ENCODE measurements at regions of chr14 and their contacts with region 1.

Region 1: DNA sequence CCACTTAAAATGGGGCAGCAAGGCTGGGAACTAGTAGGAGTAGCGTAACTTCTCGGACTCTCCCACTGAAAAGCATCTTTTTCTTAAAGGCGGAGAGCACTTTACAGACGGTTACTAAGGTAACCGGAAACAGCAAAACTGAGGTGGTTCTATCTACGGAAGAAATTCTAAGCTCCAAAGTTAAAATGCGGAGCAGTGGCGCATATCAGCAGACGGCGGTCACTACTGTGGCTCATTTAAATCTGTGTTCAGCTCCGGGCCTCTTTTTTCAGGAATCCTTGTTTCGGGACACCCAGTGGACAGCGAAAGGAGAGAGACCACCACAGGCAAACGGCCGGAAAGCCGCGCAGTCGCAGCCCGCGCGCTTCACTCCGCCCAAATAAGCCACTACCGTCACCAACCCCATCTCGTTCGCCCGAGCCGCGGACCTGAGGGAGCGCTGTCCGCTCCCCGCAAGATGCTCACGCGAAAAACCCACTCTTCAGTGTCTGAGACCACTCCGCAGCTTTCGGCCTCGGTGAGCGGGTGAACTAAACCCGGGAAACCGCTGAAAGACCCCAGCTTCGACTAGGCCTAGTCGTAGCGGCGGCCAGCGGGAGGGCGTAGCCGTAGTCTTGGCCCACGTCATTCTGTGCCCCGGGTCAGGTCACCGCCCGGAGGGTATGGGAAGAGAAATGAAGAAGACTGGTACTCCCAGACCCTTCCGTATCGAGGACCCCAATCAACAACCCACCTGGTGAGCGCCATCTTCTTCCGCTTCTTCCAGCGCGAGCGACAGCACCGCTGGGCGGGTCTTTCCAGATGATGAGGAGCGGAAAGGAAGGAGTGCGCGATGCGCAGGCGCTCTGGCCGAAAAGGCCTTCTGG is at the start of gene SNW1:
- DNase-seq: peak; percentile 79 to 98 (median 87)
- ATAC-seq: peak; percentile 90
- H3K4me3 ChIP-seq: peak within 1 kb of the TSS; percentile 59
- H3K4me3 Mint-ChIP-seq: peak within 1 kb of the TSS; percentile 99
- H3K27ac ChIP-seq: peak within 1 kb of the TSS; percentile 89 to 94
- H3K27ac Mint-ChIP-seq: peak within 1 kb of the TSS; percentile 99
- H3K4me1 ChIP-seq: peaks cover 42% of the 10 kb centered on the region
- H3K4me1 Mint-ChIP-seq: peaks cover 45% of the 10 kb centered on the region
- H3K27me3 ChIP-seq: no peaks in the 10 kb centered on the region
- H3K27me3 Mint-ChIP-seq: no peaks in the 10 kb centered on the region
- CTCF ChIP-seq: no peak
- total RNA-seq, gene SNW1: 131 to 136 TPM

Region 2: GRCh38 chr14:77320238-77320935 is 440.2 kb before region 1 on chr14 and contains the start of gene POMT2:
- CTCF ChIA-PET with region 1: no interaction called
- POLR2A ChIA-PET with region 1: interaction called, 6 read pairs
- intact Hi-C with region 1: loop called in 1 of 2 experiments (anchors 2 kb)
- DNase-seq: peak; percentile 86 to 95 (median 90)
- ATAC-seq: peak; percentile 47
- H3K4me3 ChIP-seq: peak within 1 kb of the TSS; percentile 93
- H3K4me3 Mint-ChIP-seq: peak within 1 kb of the TSS; percentile 100
- H3K27ac ChIP-seq: peak within 1 kb of the TSS; percentile 95 to 98
- H3K27ac Mint-ChIP-seq: peak within 1 kb of the TSS; percentile 100
- H3K4me1 ChIP-seq: peaks cover 23% of the 10 kb centered on the region
- H3K4me1 Mint-ChIP-seq: peaks cover 31% of the 10 kb centered on the region
- H3K27me3 ChIP-seq: no peaks in the 10 kb centered on the region
- H3K27me3 Mint-ChIP-seq: no peaks in the 10 kb centered on the region
- CTCF ChIP-seq: peak; percentile 38
- total RNA-seq, gene POMT2: 7.6 to 8.2 TPM

Region 3: DNA sequence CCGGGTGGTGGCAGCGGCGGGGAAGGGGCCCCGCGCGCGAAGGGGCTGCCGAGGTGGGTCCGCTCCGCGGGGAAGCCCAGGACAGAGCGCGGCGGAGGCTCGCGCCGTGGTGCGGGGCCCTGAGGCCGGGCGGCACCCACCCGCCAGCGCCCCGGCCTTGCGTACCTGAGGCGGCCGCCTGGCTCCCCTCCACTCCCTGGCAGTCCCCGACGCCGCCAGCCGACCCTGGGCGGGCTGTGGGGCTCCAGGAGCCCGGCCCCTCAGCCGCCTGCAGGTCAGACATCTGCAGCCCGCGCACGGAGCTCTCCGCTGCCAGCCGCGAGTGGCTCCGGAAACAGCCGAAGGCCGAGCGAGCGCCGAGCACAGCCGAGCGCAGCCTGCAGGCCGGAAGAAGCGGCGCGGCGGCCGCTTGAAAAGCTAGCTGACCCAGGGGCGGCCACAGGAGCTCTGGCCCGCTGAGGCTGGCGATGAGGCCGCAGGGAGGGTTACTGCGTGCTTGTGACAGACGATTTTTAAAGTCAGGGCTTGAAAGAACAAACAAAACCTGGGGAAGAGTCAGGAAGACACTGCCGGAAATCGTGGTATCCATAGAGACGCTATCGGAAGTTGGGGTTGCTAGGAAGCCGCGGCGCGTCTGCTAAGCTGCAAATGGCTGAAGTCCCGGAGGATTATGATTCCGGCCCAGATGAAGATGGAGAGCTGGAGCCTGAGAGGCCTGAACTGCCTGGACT is 383.7 kb before region 1 on chr14 and contains the starts of genes SAMD15 and TMED8:
- CTCF ChIA-PET with region 1: no interaction called
- POLR2A ChIA-PET with region 1: interaction called, 4 read pairs
- intact Hi-C with region 1: loop called in 1 of 2 experiments (anchors 5 kb)
- DNase-seq: peak; percentile 61 to 93 (median 79)
- ATAC-seq: peak; percentile 96
- H3K4me3 ChIP-seq: peak within 1 kb of the TSS; percentile 78
- H3K4me3 Mint-ChIP-seq: peak within 1 kb of the TSS; percentile 95
- H3K27ac ChIP-seq: peak within 1 kb of the TSS; percentile 67 to 89
- H3K27ac Mint-ChIP-seq: peak within 1 kb of the TSS; percentile 74
- H3K4me1 ChIP-seq: peaks cover 21% of the 10 kb centered on the region
- H3K4me1 Mint-ChIP-seq: peaks cover 41% of the 10 kb centered on the region
- H3K27me3 ChIP-seq: no peaks in the 10 kb centered on the region
- H3K27me3 Mint-ChIP-seq: no peaks in the 10 kb centered on the region
- CTCF ChIP-seq: no peak
- total RNA-seq, gene SAMD15: 0.34 TPM in 1 of 2 experiments, not detected in the other
- total RNA-seq, gene TMED8: 4.9 to 5.1 TPM

Region 4: DNA sequence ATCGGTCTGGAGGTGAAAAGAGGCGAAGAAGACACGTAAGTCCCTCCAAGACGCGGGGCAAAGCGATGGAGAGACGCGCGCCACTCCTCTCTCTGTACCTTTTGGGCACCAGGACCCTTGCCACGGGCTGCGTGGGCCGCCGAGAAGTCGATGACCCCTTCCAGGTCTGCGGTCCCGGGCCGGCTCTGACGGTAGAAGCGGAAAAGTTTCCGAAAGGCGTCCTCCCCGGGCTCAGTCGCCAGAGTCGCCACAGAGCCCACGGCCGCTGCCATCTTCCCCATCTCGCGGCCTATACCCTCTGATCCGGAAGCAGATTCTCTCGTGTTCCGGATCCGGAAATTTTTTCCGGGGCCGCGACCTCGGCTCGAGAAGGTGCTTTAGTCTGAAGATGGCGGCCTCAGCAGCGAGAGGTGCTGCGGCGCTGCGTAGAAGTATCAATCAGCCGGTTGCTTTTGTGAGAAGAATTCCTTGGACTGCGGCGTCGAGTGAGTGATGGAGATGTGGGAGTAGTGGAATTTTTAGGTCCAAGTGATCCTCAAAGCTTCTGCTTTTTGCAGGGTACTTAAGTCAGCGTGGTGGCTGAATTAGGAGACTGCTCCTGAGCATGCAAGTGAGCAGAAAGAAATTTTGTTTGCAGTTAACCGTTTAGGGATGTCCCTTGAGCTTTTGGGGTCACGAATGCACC is 52.7 kb before region 1 on chr14 and contains the starts of genes ALKBH1 and SLIRP:
- CTCF ChIA-PET with region 1: interaction called, 3 read pairs
- POLR2A ChIA-PET with region 1: interaction called, 17 read pairs
- intact Hi-C with region 1: loop called in 1 of 2 experiments (anchors 1 kb)
- DNase-seq: peak; percentile 79 to 93 (median 84)
- ATAC-seq: peak; percentile 98
- H3K4me3 ChIP-seq: peak within 1 kb of the TSS; percentile 82
- H3K4me3 Mint-ChIP-seq: peak within 1 kb of the TSS; percentile 95
- H3K27ac ChIP-seq: peak within 1 kb of the TSS; percentile 10 to 65
- H3K27ac Mint-ChIP-seq: peak within 1 kb of the TSS; percentile 87
- H3K4me1 ChIP-seq: peaks cover 19% of the 10 kb centered on the region
- H3K4me1 Mint-ChIP-seq: peaks cover 54% of the 10 kb centered on the region
- H3K27me3 ChIP-seq: no peaks in the 10 kb centered on the region
- H3K27me3 Mint-ChIP-seq: no peaks in the 10 kb centered on the region
- CTCF ChIP-seq: no peak
- total RNA-seq, gene ALKBH1: 5.6 to 8.5 TPM
- total RNA-seq, gene SLIRP: 46.8 to 49.7 TPM

Region 5: GRCh38 chr14:77786148-77786547 is 25.5 kb after region 1 on chr14:
- CTCF ChIA-PET with region 1: no interaction called
- POLR2A ChIA-PET with region 1: no interaction called
- intact Hi-C with region 1: no loop called
- DNase-seq: no peak
- ATAC-seq: no peak
- H3K4me3 ChIP-seq: no peak overlapping the region
- H3K4me3 Mint-ChIP-seq: no peak overlapping the region
- H3K27ac ChIP-seq: no peak overlapping the region
- H3K27ac Mint-ChIP-seq: no peak overlapping the region
- H3K4me1 ChIP-seq: no peaks in the 10 kb centered on the region
- H3K4me1 Mint-ChIP-seq: no peaks in the 10 kb centered on the region
- H3K27me3 ChIP-seq: peaks cover 0 to 5% of the 10 kb centered on the region in 2 experiments
- H3K27me3 Mint-ChIP-seq: peaks cover 4% of the 10 kb centered on the region
- CTCF ChIP-seq: no peak

Region 6: GRCh38 chr14:77799863-77800730 is 39.5 kb after region 1 on chr14 and contains the start of gene ADCK1:
- CTCF ChIA-PET with region 1: interaction called, 4 read pairs
- POLR2A ChIA-PET with region 1: interaction called, 22 read pairs
- intact Hi-C with region 1: loop called (anchors 1 to 2 kb)
- DNase-seq: peak; percentile 62 to 90 (median 78)
- ATAC-seq: peak; percentile 90
- H3K4me3 ChIP-seq: peak within 1 kb of the TSS; percentile 67
- H3K4me3 Mint-ChIP-seq: peak within 1 kb of the TSS; percentile 85
- H3K27ac ChIP-seq: peak within 1 kb of the TSS; percentile 60 to 85
- H3K27ac Mint-ChIP-seq: peak within 1 kb of the TSS; percentile 74
- H3K4me1 ChIP-seq: peaks cover 13% of the 10 kb centered on the region
- H3K4me1 Mint-ChIP-seq: peaks cover 11% of the 10 kb centered on the region
- H3K27me3 ChIP-seq: no peaks in the 10 kb centered on the region
- H3K27me3 Mint-ChIP-seq: no peaks in the 10 kb centered on the region
- CTCF ChIP-seq: peak; percentile 38
- total RNA-seq, gene ADCK1: 7.1 to 8.7 TPM

Region 7: DNA sequence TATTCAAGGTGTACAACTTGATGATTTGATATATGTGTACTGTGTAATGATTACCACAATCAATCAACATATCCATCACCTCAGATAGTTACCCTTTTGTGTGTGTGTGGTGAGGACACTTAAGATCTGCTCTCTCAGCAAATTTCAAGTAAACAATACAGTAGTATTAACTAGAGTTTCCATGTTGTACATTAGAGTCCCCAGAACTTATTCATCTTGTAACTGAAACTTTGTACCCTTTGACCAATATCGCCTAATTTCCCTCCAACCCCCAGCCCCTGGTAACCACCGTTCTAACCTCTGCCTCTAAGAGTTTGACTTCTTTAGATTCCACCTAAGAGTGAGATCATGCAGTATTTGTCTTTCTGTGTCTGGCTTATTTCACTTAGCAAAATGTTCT is 51.4 kb after region 1 on chr14:
- CTCF ChIA-PET with region 1: no interaction called
- POLR2A ChIA-PET with region 1: interaction called, 14 read pairs
- intact Hi-C with region 1: loop called in 1 of 2 experiments (anchors 2 kb)
- DNase-seq: no peak
- ATAC-seq: no peak
- H3K4me3 ChIP-seq: no peak overlapping the region
- H3K4me3 Mint-ChIP-seq: no peak overlapping the region
- H3K27ac ChIP-seq: no peak overlapping the region
- H3K27ac Mint-ChIP-seq: no peak overlapping the region
- H3K4me1 ChIP-seq: no peaks in the 10 kb centered on the region
- H3K4me1 Mint-ChIP-seq: peaks cover 21% of the 10 kb centered on the region
- H3K27me3 ChIP-seq: no peaks in the 10 kb centered on the region
- H3K27me3 Mint-ChIP-seq: no peaks in the 10 kb centered on the region
- CTCF ChIP-seq: no peak

Measured in CD4-positive, alpha-beta T cell (primary cell).